ENCODE measurements at regions of chr10 and their contacts with region 1.

Region 1: GRCh38 chr10:92208736-92209327 is 82.0 kb downstream of the CPEB3 start:
- DNase-seq: no peak
- H3K4me3 ChIP-seq: no peak overlapping the region
- H3K4me3 Mint-ChIP-seq: no peak overlapping the region
- H3K27ac ChIP-seq: no peak overlapping the region
- H3K27ac Mint-ChIP-seq: no peak overlapping the region
- H3K4me1 ChIP-seq: peaks cover 5% of the 10 kb centered on the region
- H3K4me1 Mint-ChIP-seq: peaks cover 6 to 11% (median 9%) of the 10 kb centered on the region in 4 donors
- H3K27me3 ChIP-seq: no peaks in the 10 kb centered on the region
- H3K27me3 Mint-ChIP-seq: no peaks in the 10 kb centered on the region

Region 2: GRCh38 chr10:92240289-92241157 is 31.7 kb after region 1 on chr10:
- CTCF ChIA-PET with region 1: interaction called, 4 read pairs
- POLR2A ChIA-PET with region 1: interaction called, 4 read pairs
- intact Hi-C with region 1: loop called (anchors 1 kb)
- DNase-seq: peak; percentile 39 to 49 (median 48)
- H3K4me3 ChIP-seq: peak overlapping the region; percentile 37 to 78
- H3K4me3 Mint-ChIP-seq: peak overlapping the region; percentile 90 to 96 (median 93)
- H3K27ac ChIP-seq: peak overlapping the region; percentile 56
- H3K27ac Mint-ChIP-seq: peak overlapping the region; percentile 42 to 92 (median 81)
- H3K4me1 ChIP-seq: peaks cover 37% of the 10 kb centered on the region
- H3K4me1 Mint-ChIP-seq: peaks cover 24 to 52% (median 38%) of the 10 kb centered on the region in 4 donors
- H3K27me3 ChIP-seq: no peaks in the 10 kb centered on the region
- H3K27me3 Mint-ChIP-seq: no peaks in the 10 kb centered on the region

Measured in CD4-positive, alpha-beta memory T cell (primary cell).